Heart right ventricle (tissue), 16 donors: ENCODE measurements at regions of chr12 and their contacts with region 1.

Region 1: GRCh38 chr12:27123642-27124041 is 41.3 kb upstream of the C12orf71 start:
- DNase-seq: no peak
- ATAC-seq: no peak
- H3K4me3 ChIP-seq: no peak overlapping the region
- H3K27ac ChIP-seq: no peak overlapping the region
- H3K4me1 ChIP-seq: no peaks in the 10 kb centered on the region
- H3K27me3 ChIP-seq: no peaks in the 10 kb centered on the region
- CTCF ChIP-seq: peak in 3 of 9 donors; percentile 9 to 38 (median 33)

Region 2: DNA sequence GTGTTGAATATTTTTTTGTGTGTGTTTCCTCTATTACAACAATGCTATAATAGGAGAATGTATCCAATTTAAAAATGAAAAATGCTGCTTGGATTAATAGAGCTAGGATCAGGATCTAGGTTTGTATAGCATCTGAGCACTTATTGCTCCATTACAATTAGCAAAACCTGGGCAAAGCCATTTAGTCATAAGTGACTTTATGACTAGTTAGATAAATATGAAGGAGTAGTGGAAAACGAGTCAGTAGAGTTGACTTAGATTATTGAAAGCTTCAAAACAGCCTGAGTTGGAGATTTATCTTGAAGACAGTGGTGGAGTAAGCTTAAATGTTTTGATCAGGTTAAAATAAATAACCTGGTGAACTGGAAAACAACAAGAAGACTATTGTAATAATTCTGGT is 98.5 kb before region 1 on chr12:
- intact Hi-C with region 1: no loop called
- DNase-seq: no peak
- ATAC-seq: no peak
- H3K4me3 ChIP-seq: no peak overlapping the region
- H3K27ac ChIP-seq: no peak overlapping the region
- H3K4me1 ChIP-seq: peaks cover 6 to 34% (median 18%) of the 10 kb centered on the region in 9 donors
- H3K27me3 ChIP-seq: no peaks in the 10 kb centered on the region
- CTCF ChIP-seq: no peak

Region 3: DNA sequence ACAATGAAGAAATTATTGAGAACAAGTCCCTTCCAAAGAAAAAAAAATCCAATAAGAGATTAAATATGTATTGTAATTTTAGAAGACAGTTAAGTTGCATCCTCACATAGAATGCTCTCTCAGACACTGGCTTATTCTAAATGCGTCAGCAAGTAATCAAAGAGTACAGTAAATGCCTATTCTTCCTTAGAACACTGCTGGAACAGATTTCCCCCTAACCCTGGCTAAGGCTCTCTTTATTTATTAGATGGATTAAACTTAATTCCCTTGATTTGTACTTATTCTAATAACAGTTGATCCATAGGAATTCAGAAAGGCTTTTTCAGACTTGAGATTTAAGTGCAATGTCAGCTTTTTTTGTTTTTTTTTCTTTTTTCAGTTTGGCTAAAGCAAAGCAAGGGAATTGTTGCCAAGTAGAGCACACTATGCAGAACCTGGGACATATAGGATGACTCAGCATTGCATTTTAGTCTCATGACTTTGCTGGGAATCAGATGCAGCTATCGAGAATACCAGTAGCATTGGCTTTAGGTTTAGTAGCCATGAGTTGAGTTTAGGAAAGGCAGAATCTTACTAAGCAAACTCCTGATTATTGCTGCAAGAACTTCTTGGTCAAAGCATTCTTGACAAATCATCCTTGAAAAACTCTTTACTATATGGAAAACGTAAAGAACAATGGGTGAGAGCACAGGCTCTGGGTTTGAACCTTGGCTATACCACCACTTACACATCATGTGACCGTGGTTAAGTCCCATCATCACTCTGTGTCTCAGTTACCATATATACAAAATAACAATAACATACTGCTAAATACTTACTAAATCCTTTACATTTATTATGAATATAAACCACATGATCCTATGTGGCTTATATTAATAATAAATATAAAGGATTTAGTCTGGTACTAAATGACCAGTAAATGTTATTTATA is 74.6 kb before region 1 on chr12:
- intact Hi-C with region 1: loop called in 1 of 10 experiments (anchors 10 kb)
- DNase-seq: no peak
- ATAC-seq: no peak
- H3K4me3 ChIP-seq: no peak overlapping the region
- H3K27ac ChIP-seq: no peak overlapping the region
- H3K4me1 ChIP-seq: no peaks in the 10 kb centered on the region
- H3K27me3 ChIP-seq: no peaks in the 10 kb centered on the region
- CTCF ChIP-seq: no peak

Region 4: GRCh38 chr12:27396216-27396815 is 272.7 kb after region 1 on chr12:
- intact Hi-C with region 1: no loop called
- DNase-seq: no peak
- ATAC-seq: no peak
- H3K4me3 ChIP-seq: no peak overlapping the region
- H3K27ac ChIP-seq: no peak overlapping the region
- H3K4me1 ChIP-seq: no peaks in the 10 kb centered on the region
- H3K27me3 ChIP-seq: no peaks in the 10 kb centered on the region
- CTCF ChIP-seq: no peak